KBM-7 (cell line): ENCODE measurements at regions of chr9 and their contacts with region 1.

Region 1: GRCh38 chr9:37706290-37706689 is 47.3 kb upstream of the TRMT10B start:
- DNase-seq: no peak

Region 2: DNA sequence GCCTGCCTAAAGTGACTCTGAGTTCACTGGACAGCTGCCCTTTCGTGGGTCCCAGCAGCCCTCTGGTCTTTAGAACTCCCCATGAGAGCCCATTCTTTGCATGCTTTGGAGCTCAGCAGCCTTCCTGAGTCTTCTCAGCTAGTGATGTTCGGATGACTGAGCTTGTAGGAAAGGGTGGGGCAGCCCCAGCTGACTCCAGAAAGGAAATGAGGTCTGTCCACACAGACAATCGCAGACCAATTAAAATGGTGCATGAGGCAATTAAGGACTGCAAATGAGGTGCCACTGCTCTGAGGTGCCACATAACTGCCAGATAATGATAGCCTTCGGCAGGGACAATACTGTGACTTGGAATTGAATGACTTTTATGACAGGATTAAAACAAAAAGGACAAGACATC is 88.5 kb before region 1 on chr9:
- in situ Hi-C with region 1: loop called (anchors 25 kb)
- DNase-seq: no peak

Region 3: GRCh38 chr9:38251036-38251860 is 545.0 kb after region 1 on chr9:
- in situ Hi-C with region 1: no loop called
- DNase-seq: no peak